ENCODE measurements at regions of chr9 and their contacts with region 1.

Region 1: DNA sequence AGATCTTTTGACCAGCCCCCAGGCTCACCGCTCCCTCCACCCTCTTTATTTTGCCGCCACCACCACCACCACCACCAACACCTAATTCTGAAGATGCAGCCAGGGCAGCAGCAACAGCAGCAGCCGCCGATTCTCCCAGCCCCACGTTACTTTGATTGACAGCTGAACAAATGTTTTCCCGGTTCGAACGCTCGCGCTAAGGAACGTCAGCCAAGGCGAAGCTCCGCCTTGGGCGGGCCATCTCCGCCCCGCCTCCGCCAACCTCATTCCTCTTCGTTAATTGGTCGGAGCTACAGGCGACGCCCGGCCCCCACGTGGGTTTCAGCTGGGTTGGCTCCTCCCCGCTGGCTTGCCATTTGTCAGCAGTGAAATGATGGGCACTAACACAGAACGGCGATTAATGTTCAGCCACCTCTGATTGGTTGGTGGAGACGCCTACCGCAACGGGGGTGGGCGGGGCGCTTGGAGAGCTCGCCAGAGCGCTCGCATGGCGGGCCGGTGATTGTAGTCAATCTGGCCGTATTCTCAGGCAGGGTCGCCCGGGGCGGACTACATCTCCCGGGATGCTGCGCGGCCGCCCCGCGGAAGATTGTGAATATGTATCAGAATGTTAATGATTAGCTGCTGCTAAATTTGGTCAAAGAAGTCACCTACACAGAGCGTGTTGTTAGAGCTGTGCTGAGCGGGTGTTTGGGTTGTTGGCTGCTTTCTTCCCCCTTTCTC is at the start of gene TLE4:
- DNase-seq: peak; percentile 95
- CTCF ChIP-seq: no peak

Region 2: DNA sequence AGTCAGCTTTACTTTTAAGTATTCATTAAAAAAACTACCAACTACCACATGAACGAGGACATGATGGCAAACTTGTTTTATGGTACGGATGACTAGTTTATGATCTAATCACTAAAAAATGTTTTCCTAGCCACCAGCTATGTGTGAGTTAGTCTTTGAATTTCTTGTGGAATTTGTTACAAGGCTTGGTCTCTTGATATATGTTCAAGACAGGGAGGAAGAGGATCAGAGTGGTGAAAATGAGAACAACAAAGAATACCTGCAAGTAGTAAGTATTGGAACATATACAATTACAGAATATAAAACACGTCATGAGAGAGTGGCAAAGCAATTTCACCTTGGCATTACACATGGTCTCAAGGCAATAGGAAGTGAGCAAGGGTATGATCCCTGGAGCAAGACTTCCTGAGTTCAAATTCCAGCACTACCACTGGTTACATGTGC is 548.3 kb before region 1 on chr9:
- in situ Hi-C with region 1: loop called (anchors 25 kb)
- DNase-seq: no peak
- CTCF ChIP-seq: no peak

Region 3: DNA sequence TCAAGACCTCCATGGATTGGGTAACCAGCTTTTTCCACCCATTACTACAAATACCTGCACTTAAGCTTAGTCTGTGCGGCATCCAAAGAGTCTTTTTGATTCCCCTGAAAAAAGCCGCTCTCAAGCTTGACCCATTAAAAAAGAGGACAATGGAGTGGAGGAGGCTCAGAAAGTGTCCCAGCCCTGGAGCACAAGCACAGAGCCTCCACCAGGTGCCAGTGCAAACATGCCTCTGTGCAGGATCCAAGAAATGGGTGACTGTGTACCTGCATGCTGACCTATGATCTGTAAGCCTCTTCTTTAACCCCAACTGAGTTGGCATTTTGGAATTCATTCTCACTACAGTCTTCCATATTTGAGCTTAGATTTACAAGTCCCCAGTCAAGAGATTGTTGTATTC is 168.0 kb before region 1 on chr9:
- in situ Hi-C with region 1: no loop called
- DNase-seq: no peak
- CTCF ChIP-seq: no peak

Region 4: GRCh38 chr9:79824265-79824664 is 252.8 kb after region 1 on chr9:
- in situ Hi-C with region 1: no loop called
- DNase-seq: no peak
- CTCF ChIP-seq: no peak